A673 (cell line): ENCODE measurements at regions of chr2 and their contacts with region 1.

Region 1: DNA sequence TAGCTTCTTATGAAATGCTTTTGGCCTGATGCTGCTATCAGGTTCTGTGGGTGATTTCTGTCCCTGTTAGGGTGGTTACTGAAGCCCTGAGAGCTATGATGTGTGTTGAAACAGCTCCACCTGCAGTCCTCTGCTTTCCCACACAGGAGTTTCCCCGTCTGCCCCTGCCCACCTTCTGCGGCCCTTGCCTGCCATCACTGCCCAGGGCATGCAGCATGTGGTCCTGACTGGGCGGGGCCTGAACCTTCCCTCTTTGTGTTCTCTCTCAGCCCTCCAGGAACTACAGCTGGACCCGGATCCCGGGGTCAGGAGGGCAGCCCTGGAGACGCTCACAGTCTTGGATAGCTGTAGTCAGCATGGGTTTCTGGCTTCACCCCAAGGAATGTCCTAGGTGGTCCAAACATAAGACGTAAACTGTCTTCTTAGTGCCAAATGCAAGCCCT is 21.4 kb downstream of the HJURP start:
- DNase-seq: peak; percentile 34
- H3K4me3 ChIP-seq: no peak overlapping the region
- H3K27ac ChIP-seq: peak overlapping the region; percentile 33
- H3K4me1 ChIP-seq: no peaks in the 10 kb centered on the region
- H3K27me3 ChIP-seq: no peaks in the 10 kb centered on the region
- CTCF ChIP-seq: peak; percentile 54

Region 2: DNA sequence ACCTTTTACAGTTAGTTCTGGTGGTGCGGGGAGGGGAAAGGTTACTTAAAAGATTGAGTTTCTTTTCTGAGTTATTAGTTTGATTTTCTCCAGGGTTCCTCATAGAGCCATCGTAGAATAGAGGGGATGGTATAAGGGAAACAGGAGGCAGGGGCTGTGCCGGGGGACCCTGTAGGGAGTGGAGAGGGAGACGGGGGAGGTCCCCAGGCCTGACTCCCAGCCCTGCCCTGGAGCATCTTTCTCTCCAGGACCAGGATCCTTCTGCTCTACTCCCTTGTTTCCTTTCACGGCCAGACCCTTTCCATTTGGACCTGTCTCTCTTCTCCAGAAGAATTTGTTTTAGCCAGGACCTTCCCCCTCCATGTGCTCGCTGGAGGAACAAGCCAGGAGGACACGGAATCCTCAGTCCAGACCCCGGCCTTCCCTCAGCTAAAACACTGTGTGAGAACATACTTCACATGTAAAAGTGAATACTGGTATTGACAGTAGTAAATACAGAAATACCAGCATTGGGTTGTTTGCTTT is 443.2 kb before region 1 on chr2:
- CTCF ChIA-PET with region 1: no interaction called
- POLR2A ChIA-PET with region 1: no interaction called
- intact Hi-C with region 1: no loop called
- DNase-seq: no peak
- H3K4me3 ChIP-seq: no peak overlapping the region
- H3K27ac ChIP-seq: no peak overlapping the region
- H3K4me1 ChIP-seq: peaks cover 36% of the 10 kb centered on the region
- H3K27me3 ChIP-seq: no peaks in the 10 kb centered on the region
- CTCF ChIP-seq: no peak

Region 3: GRCh38 chr2:233449081-233449901 is 383.6 kb before region 1 on chr2:
- CTCF ChIA-PET with region 1: interaction called, 8 read pairs
- POLR2A ChIA-PET with region 1: no interaction called
- intact Hi-C with region 1: loop called (anchors 5 kb)
- DNase-seq: peak; percentile 74
- H3K4me3 ChIP-seq: no peak overlapping the region
- H3K27ac ChIP-seq: no peak overlapping the region
- H3K4me1 ChIP-seq: peaks cover 7% of the 10 kb centered on the region
- H3K27me3 ChIP-seq: no peaks in the 10 kb centered on the region
- CTCF ChIP-seq: peak; percentile 89

Region 4: GRCh38 chr2:233822101-233822771 is 10.7 kb before region 1 on chr2:
- CTCF ChIA-PET with region 1: interaction called, 14 read pairs
- POLR2A ChIA-PET with region 1: no interaction called
- intact Hi-C with region 1: no loop called
- DNase-seq: no peak
- H3K4me3 ChIP-seq: no peak overlapping the region
- H3K27ac ChIP-seq: no peak overlapping the region
- H3K4me1 ChIP-seq: no peaks in the 10 kb centered on the region
- H3K27me3 ChIP-seq: no peaks in the 10 kb centered on the region
- CTCF ChIP-seq: no peak

Region 5: DNA sequence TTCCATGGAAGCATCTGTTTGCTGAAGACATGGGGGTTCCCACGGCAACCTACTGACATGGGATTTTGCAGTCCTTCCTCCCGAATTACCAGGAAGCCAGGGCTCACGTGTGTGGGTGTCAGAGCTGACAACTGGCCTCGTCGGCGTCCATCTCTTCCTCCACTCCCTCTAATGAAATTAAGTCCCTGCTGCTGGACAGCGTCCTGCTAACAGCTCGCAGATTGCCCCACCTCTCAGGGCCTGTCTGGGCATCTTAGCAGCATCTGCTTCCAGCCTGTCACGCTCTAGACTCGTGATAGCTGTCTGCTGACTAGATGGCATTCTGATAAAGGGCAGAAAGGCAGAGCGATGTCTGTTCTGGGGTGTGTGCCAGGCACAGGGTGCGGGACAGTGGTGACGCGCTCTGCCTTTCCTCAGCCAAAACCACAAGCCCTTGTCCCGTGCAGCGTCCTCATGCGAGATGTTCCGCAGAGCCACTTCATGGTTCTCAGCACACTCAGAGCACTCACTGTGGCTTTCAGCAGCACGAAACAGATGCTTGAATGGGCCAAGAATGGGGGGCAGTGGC is 502.9 kb after region 1 on chr2:
- CTCF ChIA-PET with region 1: no interaction called
- POLR2A ChIA-PET with region 1: no interaction called
- intact Hi-C with region 1: no loop called
- DNase-seq: no peak
- H3K4me3 ChIP-seq: no peak overlapping the region
- H3K27ac ChIP-seq: no peak overlapping the region
- H3K4me1 ChIP-seq: no peaks in the 10 kb centered on the region
- H3K27me3 ChIP-seq: peaks cover 4% of the 10 kb centered on the region
- CTCF ChIP-seq: no peak